GM12878 (cell line): ENCODE measurements at regions of chr1 and their contacts with region 1.

Region 1: GRCh38 chr1:145845514-145846161 is at the start of gene NUDT17:
- DNase-seq: no peak
- ATAC-seq: peak; percentile 87
- H3K4me3 ChIP-seq: peak within 1 kb of the TSS; percentile 89
- H3K27ac ChIP-seq: peak within 1 kb of the TSS; percentile 83
- H3K4me1 ChIP-seq: peaks cover 15% of the 10 kb centered on the region
- H3K27me3 ChIP-seq: no peaks in the 10 kb centered on the region
- CTCF ChIP-seq: peak; percentile 87 to 94 (median 92)
- EP300 ChIP-seq: no peak
- POLR2A ChIP-seq: peak; percentile 81
- RAD21 ChIP-seq: peak; percentile 44
- polyA plus RNA-seq, gene NUDT17: 1.2 to 2.6 TPM

Region 2: DNA sequence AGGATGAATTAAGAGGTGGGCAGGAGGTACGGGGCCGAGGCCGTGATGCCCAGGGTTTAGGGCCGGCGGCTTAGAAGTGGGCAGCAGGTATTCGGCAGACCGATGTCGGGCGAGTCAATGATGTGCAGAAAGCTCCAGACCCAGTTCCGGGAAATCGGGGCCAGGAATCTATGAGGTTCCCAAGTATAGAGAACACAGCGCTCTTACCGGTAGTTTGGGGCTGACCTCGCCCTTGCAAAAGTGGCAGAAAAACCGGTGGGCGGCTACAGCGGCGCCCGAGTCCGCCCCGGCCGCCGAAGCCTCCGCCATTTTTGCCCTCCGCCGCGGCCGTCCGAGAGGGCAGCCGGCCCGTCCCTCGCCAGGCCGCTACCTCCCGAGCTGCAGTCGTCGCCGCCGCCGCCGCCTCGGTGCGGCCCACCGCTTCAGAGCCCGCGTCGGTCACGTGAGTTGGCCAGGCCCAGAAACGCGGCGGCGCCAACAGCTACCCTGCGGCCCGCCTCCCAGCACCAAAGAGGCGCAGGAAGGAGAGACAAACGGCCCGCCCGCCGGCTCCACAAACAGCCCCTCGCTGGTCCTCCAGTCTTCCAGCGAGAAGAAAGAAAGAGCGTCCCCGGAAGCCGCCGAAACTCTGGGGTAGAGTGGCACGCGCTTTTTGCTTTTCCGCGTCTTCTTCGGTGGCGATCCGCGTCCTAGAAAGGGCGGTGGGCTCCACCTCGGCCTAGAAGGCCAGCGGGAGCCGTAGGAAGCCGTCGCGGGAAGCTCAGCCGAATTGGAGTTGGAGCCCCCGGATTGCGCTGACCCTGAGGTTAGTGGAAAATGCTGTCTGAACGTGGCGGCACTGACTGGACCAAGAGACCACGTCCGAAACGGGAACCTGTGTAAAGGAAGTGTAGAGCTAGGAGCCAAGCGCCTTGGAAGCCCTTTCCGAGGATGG is 21.8 kb before region 1 on chr1 and contains the starts of genes POLR3C and RNF115:
- CTCF ChIA-PET with region 1: interaction called, 80 read pairs
- POLR2A ChIA-PET with region 1: interaction called, 3 read pairs
- RAD21 ChIA-PET with region 1: interaction called, 8 read pairs
- SMC1A ChIA-PET with region 1: interaction called, 20 read pairs
- in situ Hi-C with region 1: no loop called
- intact Hi-C with region 1: no loop called
- DNase-seq: peak; percentile 48
- ATAC-seq: peak; percentile 94
- H3K4me3 ChIP-seq: peak within 1 kb of the TSS; percentile 67
- H3K27ac ChIP-seq: peak within 1 kb of the TSS; percentile 95
- H3K4me1 ChIP-seq: peaks cover 10% of the 10 kb centered on the region
- H3K27me3 ChIP-seq: no peaks in the 10 kb centered on the region
- CTCF ChIP-seq: no peak
- EP300 ChIP-seq: 0 out of 4 replicates have a peak, but pooled peaks of 1 of the 2 experiments have one; percentile 34
- POLR2A ChIP-seq: peak; percentile 91
- RAD21 ChIP-seq: no peak
- polyA plus RNA-seq, gene POLR3C: 13.0 to 21.1 TPM
- polyA plus RNA-seq, gene RNF115: 3.4 to 5.4 TPM

Region 3: GRCh38 chr1:145879775-145880174 is 34.1 kb after region 1 on chr1:
- CTCF ChIA-PET with region 1: interaction called, 13 read pairs
- POLR2A ChIA-PET with region 1: no interaction called
- RAD21 ChIA-PET with region 1: no interaction called
- SMC1A ChIA-PET with region 1: interaction called, 4 read pairs
- in situ Hi-C with region 1: no loop called
- intact Hi-C with region 1: no loop called
- DNase-seq: no peak
- ATAC-seq: no peak
- H3K4me3 ChIP-seq: no peak overlapping the region
- H3K27ac ChIP-seq: no peak overlapping the region
- H3K4me1 ChIP-seq: no peaks in the 10 kb centered on the region
- H3K27me3 ChIP-seq: peaks cover 2% of the 10 kb centered on the region in 2 experiments; a peak in 2 of 4 replicates
- CTCF ChIP-seq: no peak
- EP300 ChIP-seq: no peak
- POLR2A ChIP-seq: no peak
- RAD21 ChIP-seq: no peak

Region 4: DNA sequence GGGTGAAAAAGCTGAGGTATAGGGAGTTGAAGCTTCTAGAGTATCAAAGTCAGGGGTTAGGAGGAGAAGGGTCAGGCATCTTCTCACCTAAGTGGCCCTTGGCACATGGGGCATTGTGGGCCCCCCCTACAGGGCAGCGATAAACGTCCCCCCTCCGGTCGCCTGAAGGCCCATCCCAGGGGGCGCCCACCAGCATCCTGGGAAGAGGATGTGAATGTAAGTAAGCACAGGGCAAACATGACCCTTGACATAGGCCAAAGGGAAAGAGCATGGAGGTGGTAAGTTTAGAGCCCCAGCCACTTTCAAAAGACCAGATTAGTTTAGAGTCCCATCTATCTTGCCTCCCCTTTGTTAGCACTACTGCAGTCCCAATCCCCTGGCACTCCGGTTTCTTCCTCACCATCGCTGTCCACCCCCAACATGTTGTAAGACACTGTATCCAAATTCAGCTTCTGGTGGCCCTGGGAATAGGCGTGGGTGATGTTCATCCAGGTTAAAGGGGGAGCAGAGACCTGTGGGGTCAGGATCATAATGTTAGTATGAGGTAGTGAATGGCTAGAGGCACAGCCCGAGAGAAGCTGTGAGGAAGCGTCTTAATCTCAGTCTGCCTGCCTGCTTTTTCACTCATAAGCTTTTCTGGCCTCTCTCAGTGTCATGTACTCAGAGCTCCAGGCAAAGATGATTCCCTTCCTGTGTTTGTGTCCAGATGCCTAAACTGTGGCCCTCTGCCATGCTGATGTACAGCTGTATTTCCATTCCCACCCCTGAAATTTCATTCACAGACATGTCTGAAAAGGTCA is 61.5 kb after region 1 on chr1:
- CTCF ChIA-PET with region 1: interaction called, 80 read pairs
- POLR2A ChIA-PET with region 1: interaction called, 4 read pairs
- RAD21 ChIA-PET with region 1: interaction called, 10 read pairs
- SMC1A ChIA-PET with region 1: interaction called, 8 read pairs
- in situ Hi-C with region 1: no loop called
- intact Hi-C with region 1: loop called (anchors 2 kb)
- DNase-seq: no peak
- ATAC-seq: no peak
- H3K4me3 ChIP-seq: no peak overlapping the region
- H3K27ac ChIP-seq: no peak overlapping the region
- H3K4me1 ChIP-seq: peaks cover 2% of the 10 kb centered on the region; the same call in 1 of the 2 replicates
- H3K27me3 ChIP-seq: no peaks in the 10 kb centered on the region
- CTCF ChIP-seq: no peak
- EP300 ChIP-seq: no peak
- POLR2A ChIP-seq: no peak
- RAD21 ChIP-seq: no peak

Region 5: DNA sequence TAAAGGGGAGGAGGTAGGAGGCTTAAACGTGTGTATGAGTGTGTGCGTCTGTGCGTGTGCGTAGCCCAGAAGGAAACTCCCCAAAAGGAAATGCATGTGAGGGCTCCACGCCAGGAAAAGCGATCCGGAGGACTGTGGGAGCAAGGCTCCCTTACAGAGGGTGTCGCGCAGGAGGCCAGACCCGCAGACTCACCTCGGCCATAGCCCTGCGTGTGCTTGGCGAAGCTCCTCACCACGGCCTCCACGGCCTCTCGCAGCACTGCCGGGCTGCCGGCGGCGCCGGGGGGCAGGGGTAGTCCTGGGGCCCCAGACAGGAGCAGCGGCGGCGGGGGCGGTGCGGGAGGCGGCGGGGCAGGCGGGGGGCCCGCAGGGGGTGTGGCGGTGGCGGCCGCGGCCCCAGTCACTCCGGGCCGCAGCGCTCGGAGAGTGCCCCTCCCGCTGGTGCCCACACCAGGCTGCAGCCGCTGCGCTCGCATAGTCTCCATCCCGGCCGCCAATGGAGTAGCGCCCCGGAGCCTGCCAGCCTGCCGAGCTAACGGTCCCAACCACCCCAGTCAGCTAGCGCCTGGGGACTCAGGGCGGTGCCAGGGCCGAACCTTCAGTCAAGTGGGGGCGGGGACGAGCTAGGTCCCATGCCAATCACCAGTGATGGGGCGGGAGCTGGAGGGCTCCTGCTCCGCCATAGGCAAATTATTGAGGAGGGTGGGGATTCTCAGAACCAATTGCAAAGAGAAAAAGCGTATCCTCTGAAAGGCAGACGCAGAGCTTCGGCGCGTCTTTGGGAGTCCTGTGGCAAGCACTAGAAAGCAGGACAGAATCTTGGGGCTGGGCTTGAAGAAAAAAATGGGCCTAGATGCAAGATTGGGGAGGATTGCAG is 112.0 kb after region 1 on chr1 and contains the start of gene LIX1L:
- CTCF ChIA-PET with region 1: interaction called, 12 read pairs
- POLR2A ChIA-PET with region 1: interaction called, 3 read pairs
- RAD21 ChIA-PET with region 1: no interaction called
- SMC1A ChIA-PET with region 1: interaction called, 3 read pairs
- in situ Hi-C with region 1: no loop called
- intact Hi-C with region 1: no loop called
- DNase-seq: peak; percentile 89
- ATAC-seq: peak; percentile 90
- H3K4me3 ChIP-seq: peak within 1 kb of the TSS; percentile 78
- H3K27ac ChIP-seq: peak within 1 kb of the TSS; percentile 73
- H3K4me1 ChIP-seq: peaks cover 8% of the 10 kb centered on the region
- H3K27me3 ChIP-seq: no peaks in the 10 kb centered on the region; a peak in 1 of 4 replicates
- CTCF ChIP-seq: no peak
- EP300 ChIP-seq: no peak
- POLR2A ChIP-seq: peak; percentile 86
- RAD21 ChIP-seq: no peak
- polyA plus RNA-seq, gene LIX1L: 5.5 to 12.2 TPM

Region 6: DNA sequence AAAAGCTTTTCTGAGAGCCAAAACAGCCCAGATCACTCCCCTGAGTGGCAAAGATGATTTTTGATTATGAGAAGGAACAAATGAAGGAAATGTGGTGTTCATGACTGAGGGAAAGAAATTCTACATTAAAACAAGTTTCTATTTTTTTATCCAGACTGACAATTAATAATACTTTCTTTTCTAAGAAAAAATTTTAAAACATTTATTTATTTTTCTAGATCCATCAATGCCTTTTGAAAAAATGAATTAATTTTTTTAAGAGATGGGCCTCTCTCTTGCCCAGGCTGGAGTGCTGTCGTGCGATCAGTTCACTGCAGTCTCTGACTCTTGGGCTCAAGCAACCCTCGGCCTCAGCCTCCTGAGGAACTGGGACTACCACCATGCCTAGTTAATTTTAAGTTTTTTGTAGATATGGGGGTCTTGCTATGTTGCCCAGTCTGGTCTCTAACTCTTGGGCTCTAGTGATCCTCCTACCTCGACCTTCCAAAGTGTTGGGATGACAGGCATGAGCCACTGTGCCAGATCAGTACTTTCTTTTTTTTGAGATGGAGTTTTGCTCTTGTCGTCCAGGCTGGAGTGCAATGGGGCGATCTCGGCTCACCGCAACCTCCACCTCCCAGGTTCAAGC is 162.0 kb after region 1 on chr1:
- CTCF ChIA-PET with region 1: interaction called, 16 read pairs
- POLR2A ChIA-PET with region 1: interaction called, 5 read pairs
- RAD21 ChIA-PET with region 1: interaction called, 4 read pairs
- SMC1A ChIA-PET with region 1: interaction called, 18 read pairs
- in situ Hi-C with region 1: loop called (anchors 5 kb)
- intact Hi-C with region 1: no loop called
- DNase-seq: no peak
- ATAC-seq: no peak
- H3K4me3 ChIP-seq: no peak overlapping the region
- H3K27ac ChIP-seq: no peak overlapping the region
- H3K4me1 ChIP-seq: no peaks in the 10 kb centered on the region
- H3K27me3 ChIP-seq: no peaks in the 10 kb centered on the region
- CTCF ChIP-seq: no peak
- EP300 ChIP-seq: no peak
- POLR2A ChIP-seq: no peak
- RAD21 ChIP-seq: no peak

Region 7: GRCh38 chr1:146019231-146020057 is 173.8 kb after region 1 on chr1:
- CTCF ChIA-PET with region 1: interaction called, 12 read pairs
- POLR2A ChIA-PET with region 1: no interaction called
- RAD21 ChIA-PET with region 1: interaction called, 3 read pairs
- SMC1A ChIA-PET with region 1: interaction called, 9 read pairs
- in situ Hi-C with region 1: no loop called
- intact Hi-C with region 1: no loop called
- DNase-seq: no peak
- ATAC-seq: no peak
- H3K4me3 ChIP-seq: no peak overlapping the region
- H3K27ac ChIP-seq: no peak overlapping the region
- H3K4me1 ChIP-seq: no peaks in the 10 kb centered on the region
- H3K27me3 ChIP-seq: peaks cover 4 to 8% of the 10 kb centered on the region in 2 experiments; a peak in 3 of 4 replicates
- CTCF ChIP-seq: no peak
- EP300 ChIP-seq: no peak
- POLR2A ChIP-seq: no peak
- RAD21 ChIP-seq: no peak